AG04450 (cell line): ENCODE measurements at regions of chr10 and their contacts with region 1.

Region 1: GRCh38 chr10:35208536-35208935 is 81.9 kb downstream of the CREM start:
- DNase-seq: no peak
- H3K4me3 ChIP-seq: no peak overlapping the region
- H3K27ac ChIP-seq: no peak overlapping the region
- H3K27me3 ChIP-seq: no peaks in the 10 kb centered on the region
- CTCF ChIP-seq: no peak

Region 2: GRCh38 chr10:35126530-35127296 is 81.8 kb before region 1 on chr10 and contains the start of gene CREM:
- CTCF ChIA-PET with region 1: interaction called, 14 read pairs
- POLR2A ChIA-PET with region 1: no interaction called
- DNase-seq: peak; percentile 90
- H3K4me3 ChIP-seq: peak within 1 kb of the TSS; percentile 82
- H3K27ac ChIP-seq: peak within 1 kb of the TSS; percentile 99
- H3K27me3 ChIP-seq: no peaks in the 10 kb centered on the region
- CTCF ChIP-seq: peak; percentile 72
- polyA plus RNA-seq, gene CREM: 37.9 and 48.2 TPM in 2 replicates

Region 3: DNA sequence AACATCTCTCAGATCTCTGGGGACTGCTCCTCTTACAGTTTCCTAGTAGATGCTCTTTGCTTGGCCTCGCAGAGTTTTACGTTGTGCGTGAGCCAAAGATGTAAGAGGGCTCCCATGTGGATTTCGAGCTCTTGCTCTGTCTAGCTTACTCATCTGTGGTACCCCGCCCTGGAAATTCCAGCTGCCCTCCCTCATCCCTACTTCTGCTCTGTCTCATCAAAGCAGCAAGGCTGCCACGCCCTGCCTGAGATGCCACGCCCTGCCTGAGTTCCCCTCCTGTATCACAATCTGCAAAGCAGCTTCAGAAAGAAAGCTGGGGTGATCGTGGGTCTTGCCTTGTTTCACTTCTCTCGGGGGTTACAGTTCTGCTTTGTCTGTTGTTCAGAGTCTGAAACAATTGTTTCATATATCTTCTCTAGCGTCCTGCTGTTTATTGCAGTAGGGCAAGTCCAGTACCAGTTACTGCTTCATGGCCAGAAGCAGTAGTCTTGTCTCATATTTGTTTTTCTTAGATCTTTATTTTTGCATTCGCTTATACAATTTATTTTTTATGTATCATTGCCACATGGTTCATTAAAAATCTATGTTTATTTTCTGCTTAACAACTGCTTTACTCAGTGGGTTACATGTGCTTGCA is 91.6 kb after region 1 on chr10:
- CTCF ChIA-PET with region 1: no interaction called
- POLR2A ChIA-PET with region 1: no interaction called
- DNase-seq: no peak
- H3K4me3 ChIP-seq: no peak overlapping the region
- H3K27ac ChIP-seq: no peak overlapping the region
- H3K27me3 ChIP-seq: no peaks in the 10 kb centered on the region
- CTCF ChIP-seq: no peak

Region 4: DNA sequence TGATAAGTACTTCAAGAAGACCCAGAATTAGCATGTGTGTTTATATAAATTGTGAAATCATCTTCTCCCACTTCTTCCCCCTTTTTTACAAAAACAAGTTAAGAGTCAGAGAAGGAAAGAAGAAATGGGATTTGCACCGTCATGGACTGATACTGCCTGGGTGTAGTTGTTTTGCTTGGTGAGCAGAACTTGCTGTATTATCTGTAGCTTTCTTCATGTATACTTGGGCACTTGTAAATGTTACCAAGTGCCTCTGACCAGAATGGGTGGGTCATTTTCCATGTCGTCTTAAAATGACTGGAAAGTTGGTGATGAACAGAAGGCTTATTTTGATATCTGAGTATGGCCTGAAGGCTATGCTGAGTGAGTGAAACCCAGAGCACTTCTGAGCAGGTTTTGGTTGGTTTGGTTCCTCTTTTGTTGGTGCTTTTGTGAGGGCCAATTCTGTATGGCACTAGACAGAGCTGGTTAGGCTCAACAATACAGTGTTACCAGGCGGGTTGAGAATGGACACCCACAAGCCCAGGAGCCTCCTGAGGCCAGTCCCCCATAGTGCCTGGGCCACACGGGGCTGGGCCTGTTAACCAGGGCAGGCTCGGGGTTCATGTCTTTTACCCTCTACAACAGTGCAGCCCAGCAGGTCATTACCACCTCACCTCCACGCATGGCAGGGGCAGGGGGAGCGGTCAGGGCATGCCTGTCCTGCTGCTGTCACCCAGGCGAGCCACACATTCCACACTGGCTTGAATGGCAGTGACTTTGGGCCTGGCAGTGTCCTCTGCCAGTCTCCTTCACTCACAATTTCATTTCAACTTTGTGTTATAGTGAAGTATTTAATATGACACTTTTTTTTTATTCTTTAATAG is 242.8 kb after region 1 on chr10:
- CTCF ChIA-PET with region 1: no interaction called
- POLR2A ChIA-PET with region 1: interaction called, 10 read pairs
- DNase-seq: no peak
- H3K4me3 ChIP-seq: no peak overlapping the region
- H3K27ac ChIP-seq: peak overlapping the region; percentile 62
- H3K27me3 ChIP-seq: no peaks in the 10 kb centered on the region
- CTCF ChIP-seq: no peak

Region 5: DNA sequence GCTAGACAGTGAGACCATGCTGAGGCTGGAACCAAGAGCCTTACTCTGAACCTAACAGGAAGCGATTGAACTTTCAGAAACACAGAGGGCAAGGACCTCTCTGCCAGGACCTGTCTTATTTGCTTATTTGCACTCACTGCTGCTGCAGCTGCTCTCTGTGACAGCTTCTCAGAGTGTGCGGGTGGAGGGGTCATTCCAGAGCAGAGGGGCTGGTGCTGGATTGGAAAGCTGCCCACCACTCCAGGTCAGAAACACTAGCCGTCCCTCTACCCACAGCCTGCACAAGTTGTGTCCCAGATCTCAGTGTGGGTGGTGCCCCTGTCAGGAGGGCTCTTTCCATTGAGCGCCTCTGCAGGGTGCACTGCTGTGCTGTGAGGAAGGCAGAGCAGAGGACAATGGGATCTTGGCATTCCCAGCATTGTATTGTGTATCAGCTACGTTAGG is 254.0 kb after region 1 on chr10:
- CTCF ChIA-PET with region 1: no interaction called
- POLR2A ChIA-PET with region 1: no interaction called
- DNase-seq: no peak
- H3K4me3 ChIP-seq: no peak overlapping the region
- H3K27ac ChIP-seq: no peak overlapping the region
- H3K27me3 ChIP-seq: no peaks in the 10 kb centered on the region
- CTCF ChIP-seq: no peak